G401 (cell line): ENCODE measurements at regions of chr17 and their contacts with region 1.

Region 1: DNA sequence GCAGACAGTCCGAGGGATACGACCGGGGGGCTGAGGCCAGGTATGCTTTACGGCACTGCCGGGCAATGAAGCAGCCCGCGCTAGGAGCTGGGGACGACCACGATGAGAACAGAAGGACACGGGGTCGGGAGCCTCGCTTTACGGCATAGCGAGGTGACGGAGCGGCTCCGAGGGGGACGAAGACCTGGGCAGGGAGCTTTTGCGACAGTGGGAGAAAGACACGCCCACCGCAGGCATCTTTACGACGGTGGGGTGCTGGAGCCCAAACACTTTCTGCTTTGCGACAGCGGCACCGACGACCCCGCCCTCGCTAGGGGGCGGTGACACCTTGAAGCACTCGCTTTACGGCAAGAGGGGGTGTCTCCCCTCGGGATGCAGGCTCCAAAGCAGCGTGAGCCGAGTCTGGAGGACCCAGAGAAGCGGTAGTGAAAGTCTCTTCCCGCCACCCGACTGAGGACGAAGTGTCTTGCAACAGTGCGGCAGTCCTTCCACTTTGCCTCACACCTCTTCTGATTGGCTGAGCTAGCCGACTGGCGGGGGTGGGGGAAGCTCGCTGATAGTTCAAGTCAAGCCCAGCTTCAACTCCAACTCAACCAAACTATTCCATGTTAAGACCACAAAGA is 350 bp upstream of the NEURL4 start:
- DNase-seq: peak; percentile 98

Region 2: GRCh38 chr17:7219812-7220581 is 109.5 kb before region 1 on chr17 and contains the starts of genes ACADVL and DLG4:
- in situ Hi-C with region 1: loop called (anchors 10 kb)
- DNase-seq: peak; percentile 88
- total RNA-seq, gene ACADVL: 399 and 405 TPM in 2 replicates
- total RNA-seq, gene DLG4: 15.5 and 18.8 TPM in 2 replicates

Region 3: GRCh38 chr17:7394452-7395191 is 65.1 kb after region 1 on chr17 and contains the start of gene PLSCR3:
- in situ Hi-C with region 1: no loop called
- DNase-seq: peak; percentile 82
- total RNA-seq, gene PLSCR3: 7.9 and 8.3 TPM in 2 replicates

Region 4: GRCh38 chr17:7404737-7405349 is 75.4 kb after region 1 on chr17:
- in situ Hi-C with region 1: no loop called
- DNase-seq: peak; percentile 51